Ovary (tissue), 10 donors: ENCODE measurements at regions of chr7 and their contacts with region 1.

Region 1: GRCh38 chr7:76267107-76267893 is 35.2 kb upstream of the HSPB1 start:
- DNase-seq: no peak
- H3K4me3 ChIP-seq: peak overlapping the region; percentile 19
- H3K27ac ChIP-seq: no peak overlapping the region
- H3K4me1 ChIP-seq: peaks cover 3% of the 10 kb centered on the region
- H3K27me3 ChIP-seq: no peaks in the 10 kb centered on the region
- CTCF ChIP-seq: no peak
- EP300 ChIP-seq: no peak
- POLR2A ChIP-seq: no peak

Region 2: DNA sequence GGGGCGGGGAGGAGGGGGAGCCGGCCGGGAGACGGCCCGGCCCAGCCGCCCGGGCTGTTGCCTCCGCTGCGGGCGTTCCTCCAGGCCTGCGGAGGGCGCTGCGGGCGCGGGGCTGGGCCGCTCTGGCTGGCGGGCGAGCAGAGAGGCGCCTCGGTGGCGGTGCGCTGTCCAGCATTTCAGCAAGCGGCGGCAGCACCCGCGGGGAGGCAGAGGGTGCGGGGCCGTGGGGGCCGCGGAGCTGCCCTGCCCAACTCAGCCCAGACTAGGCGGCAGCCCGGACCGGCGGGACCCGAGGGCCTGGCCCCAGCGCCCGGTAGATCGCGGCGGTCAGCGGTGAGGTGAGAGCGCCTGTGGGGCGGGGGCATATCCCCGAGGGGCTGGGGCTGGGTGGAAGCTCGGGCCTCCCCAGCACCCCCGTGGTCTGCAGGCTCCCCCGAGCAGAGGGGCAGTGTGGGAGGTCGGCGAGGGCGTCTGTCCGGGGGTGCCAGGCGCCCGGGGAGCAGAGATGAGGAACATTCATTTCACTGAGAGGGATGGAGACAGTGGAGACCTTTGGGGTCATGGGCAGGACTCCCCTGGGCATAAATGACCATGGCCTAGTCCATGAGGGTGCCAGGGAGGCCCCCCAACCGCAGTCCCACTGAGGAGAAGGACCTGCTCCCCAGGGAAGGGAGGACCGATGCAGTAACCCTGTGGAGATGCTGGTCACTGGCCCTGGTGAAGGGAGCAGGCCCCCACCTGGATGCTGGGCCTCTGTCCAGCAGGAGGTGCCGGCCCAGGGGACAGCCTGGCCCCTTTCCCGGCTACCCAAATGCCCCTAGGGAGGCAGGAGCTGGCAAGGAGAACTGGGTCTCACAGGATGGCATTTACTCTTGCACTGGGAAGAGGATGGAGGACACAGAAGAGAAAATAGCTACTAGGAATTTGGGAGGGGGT is 65.3 kb before region 1 on chr7 and contains the start of gene SRRM3:
- intact Hi-C with region 1: loop called in 1 of 4 experiments (anchors 5 kb)
- DNase-seq: peak; percentile 64 to 88 (median 75)
- H3K4me3 ChIP-seq: no peak within 1 kb of the TSS
- H3K27ac ChIP-seq: no peak within 1 kb of the TSS
- H3K4me1 ChIP-seq: no peaks in the 10 kb centered on the region
- H3K27me3 ChIP-seq: no peaks in the 10 kb centered on the region
- CTCF ChIP-seq: peak; percentile 25 to 42 (median 26)
- EP300 ChIP-seq: no peak
- POLR2A ChIP-seq: no peak
- total RNA-seq, gene SRRM3: 4.4 to 13.4 (median 6.6) TPM